Left ventricle myocardium superior (tissue), 1 donor: ENCODE measurements at regions of chr2 and their contacts with region 1.

Region 1: GRCh38 chr2:49309461-49309860 is 155.1 kb upstream of the FSHR start:
- DNase-seq: no peak
- ATAC-seq: no peak

Region 2: GRCh38 chr2:49278561-49278960 is 30.9 kb before region 1 on chr2:
- intact Hi-C with region 1: loop called (anchors 1 kb)
- DNase-seq: no peak
- ATAC-seq: no peak

Region 3: DNA sequence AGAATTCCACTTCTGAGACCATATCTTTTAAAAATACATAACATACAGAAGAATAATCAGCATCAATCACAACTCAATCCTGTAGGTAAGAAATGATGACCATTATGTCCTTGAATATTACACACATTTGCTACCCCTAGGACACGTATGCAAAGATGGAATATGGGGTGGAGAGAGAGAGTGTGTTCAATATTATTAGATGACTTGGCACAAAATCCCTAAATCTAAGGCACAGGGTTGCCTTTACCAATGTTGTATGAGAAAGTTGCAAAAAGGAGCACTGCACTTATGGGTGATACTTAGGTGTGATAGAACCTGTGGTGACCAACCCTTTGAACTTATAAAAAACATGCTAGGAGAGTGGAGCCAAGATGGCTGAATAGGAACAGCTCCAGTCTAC is 171.1 kb after region 1 on chr2:
- intact Hi-C with region 1: no loop called
- DNase-seq: no peak
- ATAC-seq: no peak